Heart left ventricle (tissue), 16 donors: ENCODE measurements at regions of chr9 and their contacts with region 1.

Region 1: DNA sequence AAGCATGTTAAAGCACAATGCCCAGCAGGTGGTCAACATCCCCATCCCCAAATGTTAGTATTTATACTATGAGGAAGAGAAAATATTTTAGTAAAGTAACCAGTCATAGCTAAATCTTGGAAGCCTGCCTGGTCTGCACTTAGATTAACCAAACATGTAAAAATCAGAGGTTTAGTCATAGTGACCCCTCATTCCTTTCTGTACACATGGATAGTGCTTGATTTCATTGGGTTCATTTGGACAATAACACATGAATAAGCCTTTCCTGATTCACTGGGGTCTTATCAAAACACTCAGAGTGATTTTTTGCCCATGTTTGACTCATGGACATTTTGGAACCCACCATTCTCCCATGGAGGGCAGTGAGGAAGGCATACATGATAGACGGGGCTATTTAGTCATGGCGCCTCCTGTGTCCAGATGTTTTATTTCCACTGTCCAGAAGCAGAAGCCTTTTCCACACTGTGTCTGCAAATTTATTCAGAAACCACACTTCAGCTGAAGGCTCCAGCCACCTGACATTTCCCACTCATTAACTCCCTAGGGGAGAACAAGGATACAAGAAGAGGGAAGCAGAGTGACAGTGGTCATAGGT is 32.5 kb downstream of the OR1J1 start:
- DNase-seq: no peak
- ATAC-seq: peak in 1 of 4 donors; percentile 77
- H3K4me3 ChIP-seq: no peak overlapping the region
- H3K27ac ChIP-seq: no peak overlapping the region
- H3K4me1 ChIP-seq: no peaks in the 10 kb centered on the region
- H3K27me3 ChIP-seq: peaks cover 0 to 3% (median 0%) of the 10 kb centered on the region in 9 donors
- CTCF ChIP-seq: no peak
- POLR2A ChIP-seq: no peak

Region 2: DNA sequence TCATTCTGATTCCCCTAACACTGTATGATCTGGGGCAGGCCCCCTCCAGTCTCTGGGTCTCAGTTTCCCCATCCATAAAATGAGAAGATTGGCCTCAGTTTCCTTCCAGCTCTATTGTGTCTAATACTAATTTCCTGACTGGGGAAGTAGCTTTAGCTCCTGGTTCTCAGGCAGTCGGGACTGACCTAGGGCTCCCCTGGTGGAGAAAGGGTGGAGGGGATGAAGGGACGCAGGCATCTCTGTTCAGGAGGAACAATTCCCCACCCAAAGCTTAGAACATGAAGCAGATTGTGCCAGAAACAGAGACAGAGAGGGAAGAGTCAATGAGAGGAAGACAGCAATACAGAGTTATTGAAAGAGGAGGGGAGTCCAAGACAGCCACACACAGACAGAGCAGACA is 88.6 kb before region 1 on chr9:
- intact Hi-C with region 1: loop called in 2 of 10 experiments (anchors 5 to 10 kb)
- DNase-seq: no peak
- ATAC-seq: no peak
- H3K4me3 ChIP-seq: no peak overlapping the region
- H3K27ac ChIP-seq: no peak overlapping the region
- H3K4me1 ChIP-seq: peaks cover 0 to 7% (median 0%) of the 10 kb centered on the region in 12 donors
- H3K27me3 ChIP-seq: no peaks in the 10 kb centered on the region
- CTCF ChIP-seq: peak in 4 of 12 donors; percentile 12 to 24 (median 13)
- POLR2A ChIP-seq: no peak

Region 3: DNA sequence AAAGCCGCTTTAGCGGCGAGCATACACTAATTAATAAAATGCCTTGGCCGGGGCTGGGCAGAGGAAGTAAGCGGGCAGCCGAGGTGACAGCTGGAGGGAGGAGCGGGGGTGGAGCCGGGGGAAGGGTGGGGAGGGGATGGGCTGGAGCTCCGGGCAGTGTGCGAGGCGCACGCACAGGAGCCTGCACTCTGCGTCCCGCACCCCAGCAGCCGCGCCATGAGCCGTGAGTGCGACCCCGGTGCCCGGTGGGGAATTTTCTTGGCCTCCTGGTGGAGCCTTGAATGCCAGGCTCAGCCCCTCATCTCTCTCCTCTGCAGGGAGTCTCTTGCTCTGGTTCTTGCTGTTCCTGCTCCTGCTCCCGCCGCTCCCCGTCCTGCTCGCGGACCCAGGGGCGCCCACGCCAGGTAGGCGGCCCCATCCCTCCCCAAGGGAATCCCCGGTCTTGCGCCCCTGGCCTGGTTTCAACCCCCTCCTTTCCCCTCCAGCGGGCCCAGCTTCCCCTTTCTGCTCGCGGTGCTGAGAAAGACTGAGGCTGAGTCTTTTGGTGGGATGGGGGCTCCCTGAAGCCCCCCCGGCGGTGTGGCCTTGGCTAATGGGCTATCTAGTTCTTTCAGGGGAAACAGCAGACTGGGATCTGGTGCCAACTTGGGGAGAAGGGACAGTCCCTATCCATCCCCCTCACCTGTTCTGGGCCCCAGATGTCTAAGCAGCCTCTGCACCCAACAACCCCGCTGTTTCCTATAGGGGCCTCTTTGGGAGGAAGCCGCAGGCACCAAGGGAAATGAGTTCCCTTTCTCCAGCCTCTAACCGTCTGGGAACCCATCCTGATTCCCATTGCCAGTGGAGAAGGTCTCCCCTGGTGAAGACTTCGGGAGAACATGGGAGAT is 74.1 kb before region 1 on chr9 and contains the start of gene PTGS1:
- intact Hi-C with region 1: loop called in 3 of 10 experiments (anchors 5 to 10 kb)
- DNase-seq: peak; percentile 54 to 77 (median 61)
- ATAC-seq: peak in 3 of 4 donors; percentile 65 to 70 (median 65)
- H3K4me3 ChIP-seq: peak within 1 kb of the TSS in 11 of 12 donors; percentile 27 to 69 (median 48)
- H3K27ac ChIP-seq: peak within 1 kb of the TSS in 4 of 12 donors; percentile 17 to 87 (median 60)
- H3K4me1 ChIP-seq: peaks cover 0 to 41% (median 17%) of the 10 kb centered on the region in 12 donors
- H3K27me3 ChIP-seq: peaks cover 0 to 9% (median 0%) of the 10 kb centered on the region in 9 donors
- CTCF ChIP-seq: no peak
- POLR2A ChIP-seq: no peak
- total RNA-seq, gene PTGS1: 2.0 to 24.7 (median 6.3) TPM

Region 4: DNA sequence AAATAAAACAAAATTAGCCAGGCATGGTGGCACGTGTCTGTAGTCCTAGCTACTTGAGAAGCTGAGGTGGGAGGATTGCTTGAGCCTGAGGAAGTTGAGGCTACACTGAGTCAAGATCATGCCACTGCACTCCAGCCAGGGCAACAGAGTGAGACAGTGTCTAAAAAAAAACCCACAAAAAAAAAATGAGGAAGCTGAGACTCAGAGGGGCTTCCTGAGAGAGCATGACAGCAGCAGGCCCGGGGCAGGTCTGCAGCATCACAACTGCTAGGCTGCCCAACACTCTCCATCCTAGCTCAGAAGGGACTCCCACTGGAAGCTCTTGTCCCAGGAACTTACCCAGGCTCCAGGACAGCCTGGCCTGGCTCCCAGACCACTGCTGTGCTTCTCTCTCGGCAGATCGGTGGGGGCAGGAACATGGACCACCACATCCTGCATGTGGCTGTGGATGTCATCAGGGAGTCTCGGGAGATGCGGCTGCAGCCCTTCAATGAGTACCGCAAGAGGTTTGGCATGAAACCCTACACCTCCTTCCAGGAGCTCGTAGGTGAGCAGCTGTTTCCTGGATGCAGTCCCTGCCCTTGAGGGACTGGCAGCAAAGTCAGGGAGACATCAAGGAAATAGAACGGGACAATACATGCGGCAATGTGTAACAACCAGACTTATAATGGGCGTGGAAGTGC is 55.3 kb before region 1 on chr9:
- intact Hi-C with region 1: loop called in 2 of 10 experiments (anchors 5 to 10 kb)
- DNase-seq: no peak
- ATAC-seq: no peak
- H3K4me3 ChIP-seq: no peak overlapping the region
- H3K27ac ChIP-seq: peak overlapping the region in 1 of 12 donors; percentile 2
- H3K4me1 ChIP-seq: peaks cover 0 to 28% (median 5%) of the 10 kb centered on the region in 12 donors
- H3K27me3 ChIP-seq: no peaks in the 10 kb centered on the region
- CTCF ChIP-seq: no peak
- POLR2A ChIP-seq: no peak